ENCODE measurements at regions of chr2 and their contacts with region 1.

Region 1: GRCh38 chr2:204024503-204024902 is 87.9 kb downstream of the ICOS start:
- DNase-seq: peak; percentile 71
- H3K4me3 Mint-ChIP-seq: no peak overlapping the region
- H3K27ac Mint-ChIP-seq: no peak overlapping the region
- H3K4me1 Mint-ChIP-seq: peaks cover 51% of the 10 kb centered on the region
- H3K27me3 Mint-ChIP-seq: no peaks in the 10 kb centered on the region

Region 2: GRCh38 chr2:203934041-203934492 is 90.4 kb before region 1 on chr2:
- CTCF ChIA-PET with region 1: interaction called, 10 read pairs
- intact Hi-C with region 1: loop called (anchors 1 kb)
- DNase-seq: peak; percentile 78
- H3K4me3 Mint-ChIP-seq: peak overlapping the region; percentile 51
- H3K27ac Mint-ChIP-seq: peak overlapping the region; percentile 96
- H3K4me1 Mint-ChIP-seq: peaks cover 64% of the 10 kb centered on the region
- H3K27me3 Mint-ChIP-seq: no peaks in the 10 kb centered on the region

Region 3: GRCh38 chr2:203989521-203989920 is 35.0 kb before region 1 on chr2:
- CTCF ChIA-PET with region 1: interaction called, 9 read pairs
- intact Hi-C with region 1: loop called (anchors 1 kb)
- DNase-seq: no peak
- H3K4me3 Mint-ChIP-seq: no peak overlapping the region
- H3K27ac Mint-ChIP-seq: peak overlapping the region; percentile 80
- H3K4me1 Mint-ChIP-seq: peaks cover 14% of the 10 kb centered on the region
- H3K27me3 Mint-ChIP-seq: no peaks in the 10 kb centered on the region

Region 4: GRCh38 chr2:204051476-204051875 is 27.0 kb after region 1 on chr2:
- CTCF ChIA-PET with region 1: interaction called, 9 read pairs
- intact Hi-C with region 1: loop called (anchors 2 kb)
- DNase-seq: no peak
- H3K4me3 Mint-ChIP-seq: no peak overlapping the region
- H3K27ac Mint-ChIP-seq: no peak overlapping the region
- H3K4me1 Mint-ChIP-seq: peaks cover 17% of the 10 kb centered on the region
- H3K27me3 Mint-ChIP-seq: no peaks in the 10 kb centered on the region

Region 5: GRCh38 chr2:204177977-204178540 is 153.6 kb after region 1 on chr2:
- CTCF ChIA-PET with region 1: interaction called, 8 read pairs
- intact Hi-C with region 1: loop called (anchors 1 kb)
- DNase-seq: peak; percentile 88
- H3K4me3 Mint-ChIP-seq: no peak overlapping the region
- H3K27ac Mint-ChIP-seq: no peak overlapping the region
- H3K4me1 Mint-ChIP-seq: no peaks in the 10 kb centered on the region
- H3K27me3 Mint-ChIP-seq: peaks cover 5% of the 10 kb centered on the region

Region 6: GRCh38 chr2:204325468-204325867 is 301.0 kb after region 1 on chr2:
- CTCF ChIA-PET with region 1: no interaction called
- intact Hi-C with region 1: loop called (anchors 1 kb)
- DNase-seq: peak; percentile 74
- H3K4me3 Mint-ChIP-seq: no peak overlapping the region
- H3K27ac Mint-ChIP-seq: no peak overlapping the region
- H3K4me1 Mint-ChIP-seq: no peaks in the 10 kb centered on the region
- H3K27me3 Mint-ChIP-seq: no peaks in the 10 kb centered on the region